Activated naive CD4-positive, alpha-beta T cell treated with anti-CD3 and anti-CD28 coated beads for 36 hours (primary cell): ENCODE measurements at regions of chr10 and their contacts with region 1.

Region 1: DNA sequence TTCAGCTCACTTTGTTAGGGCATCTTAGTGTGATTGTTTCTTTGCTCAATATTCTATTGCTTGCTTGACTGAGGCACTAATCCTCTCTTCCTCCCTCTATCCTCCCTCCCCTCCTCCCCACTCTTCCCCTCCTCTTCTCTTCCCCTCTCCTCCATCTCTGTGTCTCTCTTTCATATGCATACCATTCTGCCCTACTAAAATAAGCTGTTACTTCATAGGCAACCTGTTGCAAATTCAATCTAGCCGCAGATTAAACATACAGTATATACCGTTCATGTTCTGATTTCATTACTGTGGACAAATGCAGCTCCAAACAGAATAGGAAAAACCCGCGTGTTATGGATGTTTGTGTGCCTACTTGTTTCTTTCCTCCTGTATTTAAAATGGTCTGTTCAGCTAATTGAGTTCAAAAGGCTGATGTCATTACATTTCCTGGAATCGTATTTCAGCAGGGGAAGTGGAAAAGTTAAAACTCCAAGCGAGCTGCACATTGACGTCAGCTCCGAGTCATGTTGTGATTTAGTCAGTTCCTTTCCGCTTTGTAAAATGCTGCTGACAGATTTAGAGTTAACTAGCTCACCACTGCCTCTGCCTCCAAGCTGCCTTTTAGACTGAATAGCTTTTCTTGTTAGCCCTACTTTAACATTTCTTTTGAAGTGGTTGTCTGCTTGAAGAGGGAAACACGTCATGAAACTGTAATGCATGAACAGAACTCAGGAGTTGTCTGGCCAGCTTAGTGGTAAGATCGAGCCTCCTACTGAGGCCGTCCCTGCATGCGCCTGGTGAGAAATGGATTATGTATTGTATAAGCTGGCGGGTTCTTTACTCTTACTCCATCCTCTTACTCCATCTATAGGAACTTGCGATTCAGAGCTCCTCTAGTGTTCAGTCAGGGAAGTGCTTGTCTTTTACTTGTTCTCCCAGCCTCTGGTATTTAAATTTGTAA is 69.0 kb downstream of the CREM start:
- DNase-seq: peak; percentile 93
- H3K4me3 Mint-ChIP-seq: peak overlapping the region; percentile 81
- H3K27ac Mint-ChIP-seq: peak overlapping the region; percentile 98
- H3K4me1 Mint-ChIP-seq: peaks cover 35% of the 10 kb centered on the region
- H3K27me3 Mint-ChIP-seq: no peaks in the 10 kb centered on the region

Region 2: GRCh38 chr10:33365871-33366411 is 1829.7 kb before region 1 on chr10:
- CTCF ChIA-PET with region 1: no interaction called
- intact Hi-C with region 1: loop called (anchors 2 kb)
- DNase-seq: peak; percentile 53
- H3K4me3 Mint-ChIP-seq: no peak overlapping the region
- H3K27ac Mint-ChIP-seq: no peak overlapping the region
- H3K4me1 Mint-ChIP-seq: peaks cover 18% of the 10 kb centered on the region
- H3K27me3 Mint-ChIP-seq: peaks cover 22% of the 10 kb centered on the region

Region 3: GRCh38 chr10:34994565-34995142 is 201.0 kb before region 1 on chr10:
- CTCF ChIA-PET with region 1: interaction called, 11 read pairs
- intact Hi-C with region 1: loop called (anchors 1 kb)
- DNase-seq: peak; percentile 78
- H3K4me3 Mint-ChIP-seq: no peak overlapping the region
- H3K27ac Mint-ChIP-seq: peak overlapping the region; percentile 70
- H3K4me1 Mint-ChIP-seq: peaks cover 18% of the 10 kb centered on the region
- H3K27me3 Mint-ChIP-seq: no peaks in the 10 kb centered on the region

Region 4: GRCh38 chr10:35126530-35127296 is 68.9 kb before region 1 on chr10 and contains the start of gene CREM:
- CTCF ChIA-PET with region 1: interaction called, 124 read pairs
- intact Hi-C with region 1: loop called (anchors 1 kb)
- DNase-seq: peak; percentile 100
- H3K4me3 Mint-ChIP-seq: peak within 1 kb of the TSS; percentile 81
- H3K27ac Mint-ChIP-seq: peak within 1 kb of the TSS; percentile 95
- H3K4me1 Mint-ChIP-seq: peaks cover 48% of the 10 kb centered on the region
- H3K27me3 Mint-ChIP-seq: no peaks in the 10 kb centered on the region
- total RNA-seq, gene CREM: 107 to 111 TPM

Region 5: DNA sequence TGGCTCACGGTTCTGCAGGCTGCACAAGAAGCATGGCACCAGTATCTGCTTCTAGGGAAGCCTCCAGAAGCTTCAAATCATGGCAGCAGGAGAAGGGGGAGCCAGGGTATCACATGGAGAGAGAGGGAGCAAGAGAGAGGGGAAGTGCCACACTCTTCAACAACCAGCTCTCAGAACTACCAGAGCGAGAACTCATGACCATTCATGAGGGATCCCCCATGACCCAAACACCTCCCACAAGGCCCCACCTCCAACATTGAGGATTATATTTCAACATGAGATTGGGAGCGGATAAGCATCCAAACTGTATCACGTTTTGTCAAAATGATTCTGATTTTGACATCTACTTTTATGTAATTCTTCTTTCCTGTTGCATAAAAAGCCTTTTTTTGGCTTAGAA is 30.5 kb before region 1 on chr10:
- CTCF ChIA-PET with region 1: no interaction called
- intact Hi-C with region 1: no loop called
- DNase-seq: no peak
- H3K4me3 Mint-ChIP-seq: no peak overlapping the region
- H3K27ac Mint-ChIP-seq: no peak overlapping the region
- H3K4me1 Mint-ChIP-seq: no peaks in the 10 kb centered on the region
- H3K27me3 Mint-ChIP-seq: no peaks in the 10 kb centered on the region

Region 6: GRCh38 chr10:35208536-35208935 is 12.9 kb after region 1 on chr10:
- CTCF ChIA-PET with region 1: interaction called, 9 read pairs
- intact Hi-C with region 1: loop called (anchors 1 kb)
- DNase-seq: peak; percentile 70
- H3K4me3 Mint-ChIP-seq: peak overlapping the region; percentile 0
- H3K27ac Mint-ChIP-seq: peak overlapping the region; percentile 74
- H3K4me1 Mint-ChIP-seq: peaks cover 11% of the 10 kb centered on the region
- H3K27me3 Mint-ChIP-seq: no peaks in the 10 kb centered on the region

Region 7: DNA sequence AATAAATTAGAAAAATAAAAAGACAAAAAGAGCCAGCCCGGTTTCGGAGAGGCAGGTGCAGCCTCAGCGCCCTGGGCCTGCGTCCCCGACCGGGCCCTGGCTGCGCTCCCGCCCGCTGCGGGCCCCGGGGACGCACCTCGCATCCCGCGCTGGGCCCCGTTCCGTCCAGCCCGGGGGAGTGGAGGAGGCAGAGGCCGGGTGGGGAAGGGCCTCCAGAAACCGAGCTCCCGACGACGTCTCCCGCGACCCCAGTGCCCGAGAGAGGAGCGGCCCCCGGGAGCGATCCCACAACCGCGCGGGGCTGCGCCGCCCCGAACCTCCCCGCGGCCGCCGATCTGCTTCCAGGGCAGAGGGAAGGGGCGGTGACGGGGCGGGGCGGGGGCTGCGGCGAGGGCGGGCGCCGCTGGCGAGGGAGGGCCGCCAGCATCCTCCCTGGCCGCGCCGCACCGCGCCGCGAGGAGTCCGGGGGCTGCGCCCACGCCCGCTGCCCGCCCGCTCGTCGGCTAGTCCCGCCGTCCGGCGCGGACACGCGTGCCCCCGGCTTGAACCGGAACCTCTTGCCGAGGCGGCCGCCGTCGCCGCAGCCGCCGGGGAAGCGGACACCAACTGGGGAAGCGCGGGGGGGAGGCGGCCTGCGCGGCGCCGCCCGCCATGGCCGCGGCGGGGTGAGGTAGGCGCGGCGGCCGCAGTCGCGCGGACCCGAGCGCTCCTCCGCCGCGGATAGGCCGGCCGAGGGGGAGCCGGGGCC is 140.6 kb after region 1 on chr10 and contains the start of gene CCNY:
- CTCF ChIA-PET with region 1: no interaction called
- intact Hi-C with region 1: loop called (anchors 1 kb)
- DNase-seq: peak; percentile 81
- H3K4me3 Mint-ChIP-seq: peak within 1 kb of the TSS; percentile 85
- H3K27ac Mint-ChIP-seq: peak within 1 kb of the TSS; percentile 87
- H3K4me1 Mint-ChIP-seq: peaks cover 71% of the 10 kb centered on the region
- H3K27me3 Mint-ChIP-seq: no peaks in the 10 kb centered on the region
- total RNA-seq, gene CCNY: 31.2 to 32.1 TPM

Region 8: GRCh38 chr10:35642027-35642792 is 446.6 kb after region 1 on chr10 and contains the start of gene FZD8:
- CTCF ChIA-PET with region 1: no interaction called
- intact Hi-C with region 1: loop called (anchors 1 kb)
- DNase-seq: peak; percentile 75
- H3K4me3 Mint-ChIP-seq: peak within 1 kb of the TSS; percentile 78
- H3K27ac Mint-ChIP-seq: no peak within 1 kb of the TSS
- H3K4me1 Mint-ChIP-seq: peaks cover 19% of the 10 kb centered on the region
- H3K27me3 Mint-ChIP-seq: peaks cover 41% of the 10 kb centered on the region
- total RNA-seq, gene FZD8: 0.15 to 0.19 TPM